ENCODE measurements at regions of chr10 and their contacts with region 1.

Region 1: GRCh38 chr10:4131407-4132228 is 346.6 kb upstream of the KLF6 start:
- DNase-seq: peak; percentile 85
- H3K4me3 Mint-ChIP-seq: no peak overlapping the region
- H3K27ac Mint-ChIP-seq: no peak overlapping the region
- H3K4me1 Mint-ChIP-seq: peaks cover 50% of the 10 kb centered on the region
- H3K27me3 Mint-ChIP-seq: no peaks in the 10 kb centered on the region

Region 2: DNA sequence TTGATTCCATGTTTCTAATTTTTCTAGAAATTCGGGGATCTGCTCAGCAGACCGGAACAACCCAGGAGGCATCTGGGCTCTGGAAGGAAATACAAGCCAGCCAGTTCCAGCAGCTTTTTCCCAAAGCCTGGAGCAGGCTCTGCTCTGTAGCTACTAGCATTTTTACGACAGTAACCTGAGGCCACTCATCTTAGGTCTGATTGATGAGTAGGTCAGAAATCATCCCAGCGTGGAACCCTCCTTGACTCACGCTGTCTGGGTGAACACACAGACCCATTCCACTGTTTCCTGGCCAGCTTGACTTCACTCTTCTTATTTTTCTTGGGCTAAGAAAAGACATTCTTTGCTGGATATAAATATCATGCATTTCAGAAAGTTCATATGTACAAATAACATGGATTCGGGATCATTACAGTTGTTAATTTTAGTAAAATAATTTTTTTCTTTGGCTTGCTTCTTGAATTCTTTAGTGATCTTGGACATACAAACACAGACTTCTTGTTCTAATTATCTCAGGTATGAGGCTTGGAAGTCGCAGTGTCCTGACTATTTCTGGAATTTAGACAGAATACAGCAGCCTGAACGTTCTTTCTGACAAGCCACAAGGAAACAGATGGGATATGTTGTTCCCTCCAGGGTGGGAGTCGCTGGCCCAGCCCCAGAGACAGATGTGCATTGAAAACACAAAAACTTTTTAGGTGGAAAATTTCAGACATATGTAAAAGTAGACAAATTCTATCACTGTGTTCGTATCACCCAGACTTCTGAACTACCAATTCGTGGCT is 904.5 kb before region 1 on chr10:
- intact Hi-C with region 1: loop called (anchors 10 kb)
- DNase-seq: no peak
- H3K4me3 Mint-ChIP-seq: peak overlapping the region; percentile 51
- H3K27ac Mint-ChIP-seq: no peak overlapping the region
- H3K4me1 Mint-ChIP-seq: peaks cover 17% of the 10 kb centered on the region
- H3K27me3 Mint-ChIP-seq: peaks cover 22% of the 10 kb centered on the region

Region 3: DNA sequence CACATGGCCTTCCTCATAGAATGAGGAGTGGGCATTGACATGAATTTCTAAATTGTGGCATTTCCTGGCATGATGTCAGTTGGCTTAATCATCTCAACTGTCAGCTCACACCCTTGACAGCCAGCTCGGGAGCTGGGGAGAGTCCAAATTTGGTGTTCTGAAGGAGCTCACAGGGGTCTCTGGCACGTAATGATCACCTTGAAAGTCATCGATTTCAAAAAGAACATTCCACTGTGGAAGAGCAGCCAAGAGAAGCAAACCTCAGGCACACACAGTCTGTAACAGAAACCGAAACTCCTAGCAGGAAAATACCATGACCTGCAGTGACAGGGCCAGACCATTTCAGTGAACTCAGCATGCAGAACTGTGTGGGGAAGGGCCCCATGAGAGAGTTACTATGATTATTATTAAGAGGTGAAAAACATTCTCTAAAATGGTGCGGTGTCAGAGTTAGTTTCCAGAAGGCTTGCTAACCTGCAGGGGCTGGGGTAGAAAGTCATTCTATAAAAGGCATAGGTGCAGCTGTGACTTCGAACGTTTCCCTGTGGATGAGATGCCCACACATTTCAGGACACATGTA is 320.2 kb before region 1 on chr10:
- intact Hi-C with region 1: loop called (anchors 1 kb)
- DNase-seq: peak; percentile 90
- H3K4me3 Mint-ChIP-seq: peak overlapping the region; percentile 68
- H3K27ac Mint-ChIP-seq: no peak overlapping the region
- H3K4me1 Mint-ChIP-seq: peaks cover 71% of the 10 kb centered on the region
- H3K27me3 Mint-ChIP-seq: no peaks in the 10 kb centered on the region

Region 4: DNA sequence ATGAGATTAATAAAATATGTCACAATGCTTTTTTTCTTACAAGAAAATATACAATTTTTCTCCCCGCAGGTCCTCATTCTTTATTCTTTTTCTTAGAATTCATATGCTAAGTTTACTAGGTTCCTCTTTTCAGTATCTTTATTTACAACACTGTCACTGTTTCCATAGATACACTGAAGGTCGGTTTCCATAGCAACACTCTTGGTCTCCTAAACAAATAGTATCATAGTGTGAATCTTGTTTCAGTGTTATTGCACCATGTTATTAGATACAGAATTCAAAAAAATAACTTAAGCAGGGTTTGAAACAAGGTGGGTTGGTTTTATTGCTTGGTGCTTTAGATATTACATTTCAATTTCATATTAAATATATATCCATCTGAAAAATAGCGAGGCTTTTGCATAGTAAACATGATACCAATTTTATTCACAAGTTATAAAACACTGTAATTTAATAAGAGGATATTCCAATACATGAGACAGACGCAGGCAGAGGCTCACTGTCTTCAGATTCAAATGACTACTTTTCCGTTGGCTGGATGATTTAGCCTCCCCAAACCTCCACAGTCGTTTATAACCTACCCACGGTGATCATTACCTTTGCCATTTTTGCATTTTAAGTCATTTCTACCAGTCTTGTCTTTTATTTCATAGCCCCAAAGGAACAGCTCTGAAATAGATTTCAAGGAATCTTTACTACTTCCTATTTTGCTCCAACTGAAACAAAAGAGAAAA is 257.7 kb before region 1 on chr10:
- intact Hi-C with region 1: loop called (anchors 5 kb)
- DNase-seq: peak; percentile 81
- H3K4me3 Mint-ChIP-seq: peak overlapping the region; percentile 14
- H3K27ac Mint-ChIP-seq: peak overlapping the region; percentile 88
- H3K4me1 Mint-ChIP-seq: peaks cover 52% of the 10 kb centered on the region
- H3K27me3 Mint-ChIP-seq: no peaks in the 10 kb centered on the region

Region 5: DNA sequence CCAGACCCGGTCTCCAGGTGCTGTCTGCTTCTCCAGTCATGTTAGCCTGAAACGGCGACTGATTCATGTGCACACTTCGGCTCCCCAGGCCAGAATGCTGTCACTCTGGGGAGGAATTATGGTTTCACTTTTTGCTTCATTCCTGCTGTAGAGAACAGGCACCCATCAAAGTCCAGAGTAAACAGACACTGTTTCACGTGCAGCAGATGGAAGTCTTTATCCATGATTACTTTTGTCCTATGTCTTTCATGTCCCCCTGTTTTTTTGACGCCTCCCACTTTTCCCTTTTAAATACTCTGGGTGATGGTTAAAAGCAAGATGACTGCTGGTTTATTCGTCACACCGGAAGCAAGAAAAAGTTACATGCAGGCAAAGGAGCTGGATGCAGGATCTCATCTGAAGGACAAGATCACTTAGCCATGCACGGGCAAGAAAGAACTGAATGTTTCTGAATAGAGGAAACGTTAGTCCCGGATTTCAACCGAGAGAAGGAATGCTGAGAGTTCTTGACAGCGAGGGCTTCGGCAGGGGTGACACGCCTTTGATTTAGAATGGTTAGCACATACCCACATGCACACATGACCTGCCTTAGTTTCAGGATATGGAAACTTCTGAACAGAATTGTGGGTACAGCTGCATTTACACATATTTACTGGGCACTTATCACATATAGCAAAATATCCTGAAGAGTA is 96.6 kb before region 1 on chr10:
- intact Hi-C with region 1: loop called (anchors 2 kb)
- DNase-seq: peak; percentile 83
- H3K4me3 Mint-ChIP-seq: peak overlapping the region; percentile 73
- H3K27ac Mint-ChIP-seq: peak overlapping the region; percentile 84
- H3K4me1 Mint-ChIP-seq: peaks cover 36% of the 10 kb centered on the region
- H3K27me3 Mint-ChIP-seq: no peaks in the 10 kb centered on the region

Region 6: DNA sequence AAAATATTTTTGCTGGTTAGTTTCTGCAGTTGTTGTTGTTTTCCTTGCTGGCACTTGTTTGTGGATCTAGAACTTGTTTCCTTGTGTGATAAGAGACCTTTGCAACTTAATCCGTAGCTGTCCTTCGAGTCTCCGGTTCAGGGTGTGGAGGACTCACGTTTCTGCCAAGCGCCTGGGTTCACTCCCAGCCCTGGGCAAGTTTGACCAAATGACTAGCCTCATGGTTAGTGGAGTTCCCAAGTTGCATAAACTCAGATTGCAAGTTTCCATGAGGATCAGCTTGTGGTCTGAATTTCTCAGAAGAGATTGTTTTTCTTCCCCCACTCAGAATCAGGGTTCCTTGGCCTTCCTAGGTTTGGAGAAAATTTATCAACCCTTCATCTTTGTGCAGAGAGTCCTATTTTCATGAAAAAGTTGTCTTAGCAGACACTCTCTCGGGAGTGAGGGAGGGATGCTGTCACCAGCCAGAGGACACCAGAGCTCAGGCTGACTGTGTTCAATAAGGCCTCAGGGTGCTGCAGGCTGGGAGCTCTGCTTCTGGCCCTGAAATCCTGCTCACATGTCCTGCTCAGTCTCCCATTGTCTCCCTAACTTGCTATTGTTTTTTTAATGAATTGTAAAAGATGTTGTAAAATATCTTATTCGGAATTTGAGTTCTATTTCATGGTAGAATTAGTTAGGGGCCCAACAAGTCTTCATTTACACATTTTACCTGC is 31.1 kb after region 1 on chr10:
- intact Hi-C with region 1: no loop called
- DNase-seq: peak; percentile 27
- H3K4me3 Mint-ChIP-seq: no peak overlapping the region
- H3K27ac Mint-ChIP-seq: no peak overlapping the region
- H3K4me1 Mint-ChIP-seq: no peaks in the 10 kb centered on the region
- H3K27me3 Mint-ChIP-seq: no peaks in the 10 kb centered on the region

Region 7: DNA sequence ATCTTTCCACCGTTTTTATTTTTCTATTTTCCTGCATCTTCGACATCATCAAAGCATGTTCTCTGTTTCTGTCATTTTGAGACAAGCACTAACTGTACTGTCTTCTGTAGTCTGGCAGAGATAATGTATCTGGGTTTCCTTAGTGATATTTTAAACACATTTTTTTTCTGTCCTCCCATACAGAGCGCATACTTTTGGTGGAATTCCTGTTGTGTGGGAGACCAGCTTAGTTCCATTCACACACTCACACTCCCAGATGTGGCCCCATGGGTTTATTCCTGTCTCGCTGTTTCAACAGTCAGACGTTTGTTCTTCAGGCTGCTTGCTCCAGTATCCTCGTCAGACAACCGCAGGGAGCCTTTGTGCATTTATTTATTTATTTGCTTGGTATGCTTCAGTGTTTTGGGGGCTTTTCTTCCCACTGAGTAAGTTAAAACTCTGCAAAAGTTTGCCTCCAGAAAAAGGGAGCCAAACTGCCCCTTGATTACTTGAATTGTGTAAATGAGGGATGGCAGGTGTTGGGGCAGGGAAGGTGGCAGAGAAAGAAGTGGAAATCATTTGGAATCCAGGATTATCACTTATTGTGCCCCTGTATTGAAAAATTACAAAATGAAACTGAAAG is 110.2 kb after region 1 on chr10:
- intact Hi-C with region 1: loop called (anchors 2 kb)
- DNase-seq: no peak
- H3K4me3 Mint-ChIP-seq: no peak overlapping the region
- H3K27ac Mint-ChIP-seq: no peak overlapping the region
- H3K4me1 Mint-ChIP-seq: peaks cover 38% of the 10 kb centered on the region
- H3K27me3 Mint-ChIP-seq: no peaks in the 10 kb centered on the region

Measured in activated CD4-positive, alpha-beta T cell treated with anti-CD3 and anti-CD28 coated beads, Interleukin-2, amount 10 ng/mL, durations not matched to agents 24 days and 14 days (primary cell).